MCF 10A (cell line): ENCODE measurements at regions of chr1 and their contacts with region 1.

Region 1: GRCh38 chr1:26233903-26234643 is at the start of gene CEP85:
- DNase-seq: peak; percentile 97
- H3K4me3 Mint-ChIP-seq: peak within 1 kb of the TSS; percentile 96
- H3K27ac Mint-ChIP-seq: peak within 1 kb of the TSS; percentile 85
- H3K4me1 Mint-ChIP-seq: peaks cover 30% of the 10 kb centered on the region
- H3K27me3 Mint-ChIP-seq: no peaks in the 10 kb centered on the region
- CTCF ChIP-seq: peak; percentile 80
- total RNA-seq, gene CEP85: 11.1 and 12.2 TPM in 2 replicates

Region 2: GRCh38 chr1:25810341-25811299 is 423.5 kb before region 1 on chr1:
- CTCF ChIA-PET with region 1: no interaction called
- POLR2A ChIA-PET with region 1: no interaction called
- intact Hi-C with region 1: no loop called
- DNase-seq: peak; percentile 50
- H3K4me3 Mint-ChIP-seq: no peak overlapping the region
- H3K27ac Mint-ChIP-seq: peak overlapping the region; percentile 70
- H3K4me1 Mint-ChIP-seq: peaks cover 8% of the 10 kb centered on the region
- H3K27me3 Mint-ChIP-seq: no peaks in the 10 kb centered on the region
- CTCF ChIP-seq: peak; percentile 92

Region 3: GRCh38 chr1:25922056-25922969 is 311.8 kb before region 1 on chr1:
- CTCF ChIA-PET with region 1: no interaction called
- POLR2A ChIA-PET with region 1: no interaction called
- intact Hi-C with region 1: no loop called
- DNase-seq: no peak
- H3K4me3 Mint-ChIP-seq: peak overlapping the region; percentile 40
- H3K27ac Mint-ChIP-seq: no peak overlapping the region
- H3K4me1 Mint-ChIP-seq: no peaks in the 10 kb centered on the region
- H3K27me3 Mint-ChIP-seq: peaks cover 39% of the 10 kb centered on the region
- CTCF ChIP-seq: no peak

Region 4: DNA sequence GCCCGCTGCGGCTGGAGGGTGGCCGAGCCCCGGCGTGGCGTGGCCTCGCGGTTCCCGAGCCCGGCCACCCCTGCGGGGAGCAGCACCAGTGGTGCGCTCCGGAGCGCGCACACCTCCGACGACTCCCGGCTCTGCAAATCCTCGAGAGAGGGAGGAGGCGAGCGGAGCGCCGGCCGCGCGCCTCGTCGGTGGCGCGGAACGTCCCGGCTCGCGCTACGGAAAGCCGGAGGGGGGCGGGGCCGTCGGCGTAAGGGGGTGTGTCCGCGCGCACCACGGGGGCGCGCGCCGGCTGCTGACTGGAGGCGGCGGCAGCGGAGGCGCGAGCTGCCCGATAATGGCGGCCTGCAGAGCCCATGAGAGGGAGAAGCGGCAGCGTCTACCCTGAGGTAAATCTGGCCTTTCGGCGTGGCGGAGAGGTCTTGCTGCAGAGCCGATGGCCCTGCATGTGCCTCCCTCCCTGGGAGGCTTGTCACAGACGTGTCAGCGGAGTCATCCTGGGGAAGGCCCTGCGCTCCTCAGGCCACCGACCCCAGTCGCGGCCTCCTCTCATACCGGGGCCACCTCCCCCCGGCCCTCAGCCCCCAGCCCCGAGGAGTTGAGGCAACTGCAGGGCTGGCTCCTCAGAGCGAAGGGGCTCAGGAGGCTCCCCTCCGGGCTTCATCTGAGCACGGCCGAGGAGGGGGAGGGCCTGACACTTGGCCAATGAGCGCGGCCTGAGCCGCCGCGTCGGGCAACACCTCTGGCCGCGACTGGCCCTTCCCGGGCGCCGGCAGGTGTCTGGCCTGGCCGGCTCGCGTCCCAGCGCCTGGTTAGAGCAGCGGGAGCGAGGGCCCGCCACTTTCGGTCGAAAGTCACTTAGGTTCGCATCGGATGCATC is 122.3 kb before region 1 on chr1 and contains the start of gene PDIK1L:
- CTCF ChIA-PET with region 1: interaction called, 4 read pairs
- POLR2A ChIA-PET with region 1: interaction called, 12 read pairs
- intact Hi-C with region 1: no loop called
- DNase-seq: peak; percentile 93
- H3K4me3 Mint-ChIP-seq: peak within 1 kb of the TSS; percentile 85
- H3K27ac Mint-ChIP-seq: peak within 1 kb of the TSS; percentile 70
- H3K4me1 Mint-ChIP-seq: no peaks in the 10 kb centered on the region
- H3K27me3 Mint-ChIP-seq: no peaks in the 10 kb centered on the region
- CTCF ChIP-seq: no peak
- total RNA-seq, gene PDIK1L: 10.8 and 10.9 TPM in 2 replicates

Region 5: GRCh38 chr1:26126321-26127084 is 107.6 kb before region 1 on chr1:
- CTCF ChIA-PET with region 1: interaction called, 4 read pairs
- POLR2A ChIA-PET with region 1: interaction called, 19 read pairs
- intact Hi-C with region 1: no loop called
- DNase-seq: peak; percentile 76
- H3K4me3 Mint-ChIP-seq: peak overlapping the region; percentile 12
- H3K27ac Mint-ChIP-seq: peak overlapping the region; percentile 84
- H3K4me1 Mint-ChIP-seq: peaks cover 22% of the 10 kb centered on the region
- H3K27me3 Mint-ChIP-seq: no peaks in the 10 kb centered on the region
- CTCF ChIP-seq: no peak

Region 6: DNA sequence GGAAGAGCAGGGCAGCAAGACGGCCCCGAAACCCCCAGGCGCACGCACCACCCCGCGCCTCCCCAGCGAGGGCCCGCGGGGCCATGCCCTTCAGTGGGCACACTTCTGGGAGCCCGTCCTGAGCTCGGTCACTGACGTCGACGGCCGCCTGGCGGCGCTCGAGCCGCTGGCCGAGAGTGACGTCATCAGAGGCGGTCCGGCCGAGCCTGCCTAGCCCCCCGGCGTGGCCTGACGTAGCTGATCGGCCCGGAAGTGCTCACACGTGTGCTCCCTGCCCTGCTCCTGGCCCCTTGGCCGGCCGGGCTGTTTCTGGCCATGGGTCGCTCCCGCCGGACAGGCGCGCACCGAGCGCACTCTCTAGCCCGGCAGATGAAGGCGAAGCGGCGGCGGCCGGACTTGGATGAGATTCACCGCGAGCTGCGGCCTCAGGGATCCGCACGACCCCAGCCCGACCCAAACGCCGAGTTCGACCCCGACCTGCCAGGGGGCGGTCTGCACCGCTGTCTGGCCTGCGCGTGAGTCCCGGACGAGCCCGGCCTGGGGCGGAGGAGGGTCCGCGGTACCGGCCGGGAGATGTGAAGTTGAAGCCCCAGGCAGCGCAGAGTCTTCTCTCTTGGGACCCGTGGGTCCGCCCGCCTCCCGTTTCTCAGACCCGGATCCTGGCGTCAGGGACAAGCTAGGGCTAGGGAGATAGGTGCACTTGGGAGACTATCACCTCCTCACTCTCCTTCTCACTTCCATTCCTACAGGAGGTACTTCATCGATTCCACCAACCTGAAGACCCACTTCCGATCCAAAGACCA is 64.2 kb before region 1 on chr1 and contains the start of gene ZNF593:
- CTCF ChIA-PET with region 1: interaction called, 20 read pairs
- POLR2A ChIA-PET with region 1: interaction called, 27 read pairs
- intact Hi-C with region 1: loop called (anchors 1 kb)
- DNase-seq: peak; percentile 86
- H3K4me3 Mint-ChIP-seq: peak within 1 kb of the TSS; percentile 86
- H3K27ac Mint-ChIP-seq: peak within 1 kb of the TSS; percentile 93
- H3K4me1 Mint-ChIP-seq: no peaks in the 10 kb centered on the region
- H3K27me3 Mint-ChIP-seq: no peaks in the 10 kb centered on the region
- CTCF ChIP-seq: peak; percentile 91
- total RNA-seq, gene ZNF593: 61.5 and 82.6 TPM in 2 replicates

Region 7: GRCh38 chr1:26177182-26177684 is 56.8 kb before region 1 on chr1 and contains the start of gene CNKSR1:
- CTCF ChIA-PET with region 1: interaction called, 28 read pairs
- POLR2A ChIA-PET with region 1: interaction called, 50 read pairs
- intact Hi-C with region 1: no loop called
- DNase-seq: peak; percentile 82
- H3K4me3 Mint-ChIP-seq: peak within 1 kb of the TSS; percentile 97
- H3K27ac Mint-ChIP-seq: peak within 1 kb of the TSS; percentile 98
- H3K4me1 Mint-ChIP-seq: peaks cover 27% of the 10 kb centered on the region
- H3K27me3 Mint-ChIP-seq: no peaks in the 10 kb centered on the region
- CTCF ChIP-seq: peak; percentile 19
- total RNA-seq, gene CNKSR1: 31.0 and 35.5 TPM in 2 replicates

Region 8: DNA sequence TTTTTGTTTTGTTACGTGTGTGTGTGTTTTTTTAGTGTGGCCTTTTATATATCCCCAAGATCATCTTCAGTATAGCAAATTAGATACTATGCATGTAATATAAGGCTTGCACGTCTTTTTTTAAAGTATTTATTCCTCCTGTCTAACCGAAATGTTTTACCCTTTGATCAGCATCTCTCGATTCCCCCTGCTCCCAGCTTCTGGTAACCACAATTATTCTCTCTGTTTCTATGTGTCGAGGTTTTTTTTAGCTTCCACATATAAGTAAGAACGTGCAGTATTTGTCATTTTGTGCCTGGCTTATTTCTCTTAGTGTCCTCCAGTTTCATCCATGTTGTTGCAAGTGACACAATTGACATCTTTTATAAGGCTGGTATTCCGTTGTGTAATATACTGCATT is 18.6 kb after region 1 on chr1:
- CTCF ChIA-PET with region 1: interaction called, 7 read pairs
- POLR2A ChIA-PET with region 1: interaction called, 10 read pairs
- intact Hi-C with region 1: no loop called
- DNase-seq: no peak
- H3K4me3 Mint-ChIP-seq: no peak overlapping the region
- H3K27ac Mint-ChIP-seq: no peak overlapping the region
- H3K4me1 Mint-ChIP-seq: no peaks in the 10 kb centered on the region
- H3K27me3 Mint-ChIP-seq: no peaks in the 10 kb centered on the region
- CTCF ChIP-seq: no peak

Region 9: DNA sequence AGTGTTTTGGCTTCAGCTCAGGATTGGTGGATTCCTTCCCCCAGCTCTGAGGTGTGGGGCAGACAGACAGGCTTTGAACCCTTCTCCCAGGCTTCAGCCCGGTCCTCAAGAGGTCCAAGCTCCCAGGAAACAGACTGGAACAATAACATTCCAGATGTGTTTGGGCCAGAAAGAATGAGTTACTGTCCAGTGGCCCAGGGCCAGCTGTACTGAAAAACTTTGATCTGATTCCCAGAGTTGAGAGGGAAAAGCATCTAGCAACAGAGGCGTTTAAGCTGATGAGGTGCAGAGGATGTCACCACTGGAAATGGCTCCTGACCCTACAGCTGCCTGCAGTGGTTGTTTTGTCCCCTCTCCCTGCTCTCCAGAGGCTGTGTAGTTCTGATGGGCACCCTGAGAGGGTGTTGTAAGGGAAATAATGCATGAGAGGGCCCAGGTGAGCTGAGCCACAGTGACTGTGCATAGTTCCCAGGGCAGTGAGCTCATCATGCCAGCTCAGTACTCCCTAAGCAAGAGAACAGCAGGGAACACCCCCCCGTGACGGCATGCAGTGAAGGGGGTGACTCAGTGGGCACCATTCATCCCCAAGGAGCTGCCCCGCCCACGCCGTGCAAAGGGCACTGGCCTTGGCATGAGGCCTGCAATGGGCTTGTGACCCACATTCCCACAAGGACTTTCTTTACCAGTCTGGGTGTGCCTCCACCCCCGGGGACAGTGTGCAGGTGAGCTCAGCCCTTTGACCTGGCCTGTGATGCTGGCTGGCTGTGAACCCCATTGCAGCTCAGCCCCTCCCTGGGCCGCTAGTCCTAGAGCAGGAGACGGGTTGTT is 615.1 kb after region 1 on chr1:
- CTCF ChIA-PET with region 1: no interaction called
- POLR2A ChIA-PET with region 1: no interaction called
- intact Hi-C with region 1: no loop called
- DNase-seq: peak; percentile 96
- H3K4me3 Mint-ChIP-seq: no peak overlapping the region
- H3K27ac Mint-ChIP-seq: peak overlapping the region; percentile 88
- H3K4me1 Mint-ChIP-seq: peaks cover 26% of the 10 kb centered on the region
- H3K27me3 Mint-ChIP-seq: no peaks in the 10 kb centered on the region
- CTCF ChIP-seq: no peak